ENCODE measurements at regions of chr7 and their contacts with region 1.

Region 1: GRCh38 chr7:73628504-73628903 is 4.2 kb upstream of the MLXIPL start:
- DNase-seq: no peak
- H3K4me3 Mint-ChIP-seq: no peak overlapping the region
- H3K27ac Mint-ChIP-seq: no peak overlapping the region
- H3K4me1 Mint-ChIP-seq: peaks cover 3% of the 10 kb centered on the region
- H3K27me3 Mint-ChIP-seq: peaks cover 33% of the 10 kb centered on the region

Region 2: GRCh38 chr7:73667344-73668102 is 39.0 kb after region 1 on chr7 and contains the start of gene VPS37D:
- CTCF ChIA-PET with region 1: interaction called, 3 read pairs
- intact Hi-C with region 1: loop called (anchors 2 kb)
- DNase-seq: peak; percentile 91
- H3K4me3 Mint-ChIP-seq: peak within 1 kb of the TSS; percentile 63
- H3K27ac Mint-ChIP-seq: no peak within 1 kb of the TSS
- H3K4me1 Mint-ChIP-seq: peaks cover 8% of the 10 kb centered on the region
- H3K27me3 Mint-ChIP-seq: peaks cover 34% of the 10 kb centered on the region
- total RNA-seq, gene VPS37D: not detected

Region 3: GRCh38 chr7:73894733-73895551 is 266.4 kb after region 1 on chr7:
- CTCF ChIA-PET with region 1: no interaction called
- intact Hi-C with region 1: no loop called
- DNase-seq: no peak
- H3K4me3 Mint-ChIP-seq: no peak overlapping the region
- H3K27ac Mint-ChIP-seq: no peak overlapping the region
- H3K4me1 Mint-ChIP-seq: peaks cover 4% of the 10 kb centered on the region
- H3K27me3 Mint-ChIP-seq: no peaks in the 10 kb centered on the region